Panc1 (cell line): ENCODE measurements at regions of chr11 and their contacts with region 1.

Region 1: DNA sequence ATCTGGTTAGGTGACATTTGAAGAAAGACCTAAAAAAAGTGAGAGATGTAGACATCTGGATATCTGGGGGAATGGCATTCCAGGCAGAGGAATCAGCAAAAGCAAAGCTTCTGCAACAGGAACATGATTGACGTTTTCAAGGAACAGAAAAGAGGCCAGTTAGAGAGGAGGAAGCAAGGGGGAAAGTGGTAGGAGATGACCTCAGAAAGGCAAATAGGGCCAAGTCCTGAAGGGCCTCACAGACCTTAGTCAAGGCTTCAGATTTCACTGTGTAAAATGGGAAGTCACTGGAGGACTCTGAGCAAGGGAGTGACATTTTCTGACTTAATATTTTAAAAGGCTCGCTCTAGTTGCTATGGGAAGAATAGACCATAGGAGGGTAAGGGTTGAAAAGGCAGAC is 9.7 kb downstream of the DEUP1 start:
- DNase-seq: no peak
- ATAC-seq: no peak
- H3K4me3 ChIP-seq: no peak overlapping the region
- H3K27ac ChIP-seq: no peak overlapping the region
- H3K4me1 ChIP-seq: no peaks in the 10 kb centered on the region
- H3K27me3 ChIP-seq: no peaks in the 10 kb centered on the region
- CTCF ChIP-seq: no peak

Region 2: GRCh38 chr11:93279851-93280347 is 60.3 kb before region 1 on chr11:
- CTCF ChIA-PET with region 1: no interaction called
- POLR2A ChIA-PET with region 1: no interaction called
- in situ Hi-C with region 1: loop called (anchors 5 kb)
- intact Hi-C with region 1: no loop called
- DNase-seq: no peak
- ATAC-seq: no peak
- H3K4me3 ChIP-seq: no peak overlapping the region
- H3K27ac ChIP-seq: no peak overlapping the region
- H3K4me1 ChIP-seq: no peaks in the 10 kb centered on the region
- H3K27me3 ChIP-seq: no peaks in the 10 kb centered on the region
- CTCF ChIP-seq: no peak

Region 3: GRCh38 chr11:93317124-93317523 is 23.1 kb before region 1 on chr11:
- CTCF ChIA-PET with region 1: no interaction called
- POLR2A ChIA-PET with region 1: no interaction called
- in situ Hi-C with region 1: no loop called
- intact Hi-C with region 1: no loop called
- DNase-seq: no peak
- ATAC-seq: no peak
- H3K4me3 ChIP-seq: no peak overlapping the region
- H3K27ac ChIP-seq: no peak overlapping the region
- H3K4me1 ChIP-seq: no peaks in the 10 kb centered on the region
- H3K27me3 ChIP-seq: no peaks in the 10 kb centered on the region
- CTCF ChIP-seq: no peak

Region 4: GRCh38 chr11:93543292-93543977 is 203.2 kb after region 1 on chr11 and contains the start of gene SMCO4:
- CTCF ChIA-PET with region 1: no interaction called
- POLR2A ChIA-PET with region 1: no interaction called
- in situ Hi-C with region 1: no loop called
- intact Hi-C with region 1: no loop called
- DNase-seq: peak; percentile 35
- ATAC-seq: peak; percentile 97
- H3K4me3 ChIP-seq: peak within 1 kb of the TSS; percentile 65 to 91
- H3K27ac ChIP-seq: peak within 1 kb of the TSS; percentile 70
- H3K4me1 ChIP-seq: peaks cover 14% of the 10 kb centered on the region
- H3K27me3 ChIP-seq: peaks cover 16% of the 10 kb centered on the region
- CTCF ChIP-seq: peak; percentile 93
- total RNA-seq, gene SMCO4: 14.1 TPM

Region 5: GRCh38 chr11:94767761-94768601 is 1427.8 kb after region 1 on chr11 and contains the start of gene AMOTL1:
- CTCF ChIA-PET with region 1: no interaction called
- POLR2A ChIA-PET with region 1: no interaction called
- in situ Hi-C with region 1: no loop called
- intact Hi-C with region 1: no loop called
- DNase-seq: no peak
- ATAC-seq: peak; percentile 90
- H3K4me3 ChIP-seq: peak within 1 kb of the TSS; percentile 67 to 70
- H3K27ac ChIP-seq: peak within 1 kb of the TSS; percentile 62
- H3K4me1 ChIP-seq: peaks cover 28% of the 10 kb centered on the region
- H3K27me3 ChIP-seq: peaks cover 30% of the 10 kb centered on the region
- CTCF ChIP-seq: no peak; the same call in 1 of the 2 replicates
- total RNA-seq, gene AMOTL1: 16.0 TPM